OCI-LY7 (cell line): ENCODE measurements at regions of chr5 and their contacts with region 1.

Region 1: DNA sequence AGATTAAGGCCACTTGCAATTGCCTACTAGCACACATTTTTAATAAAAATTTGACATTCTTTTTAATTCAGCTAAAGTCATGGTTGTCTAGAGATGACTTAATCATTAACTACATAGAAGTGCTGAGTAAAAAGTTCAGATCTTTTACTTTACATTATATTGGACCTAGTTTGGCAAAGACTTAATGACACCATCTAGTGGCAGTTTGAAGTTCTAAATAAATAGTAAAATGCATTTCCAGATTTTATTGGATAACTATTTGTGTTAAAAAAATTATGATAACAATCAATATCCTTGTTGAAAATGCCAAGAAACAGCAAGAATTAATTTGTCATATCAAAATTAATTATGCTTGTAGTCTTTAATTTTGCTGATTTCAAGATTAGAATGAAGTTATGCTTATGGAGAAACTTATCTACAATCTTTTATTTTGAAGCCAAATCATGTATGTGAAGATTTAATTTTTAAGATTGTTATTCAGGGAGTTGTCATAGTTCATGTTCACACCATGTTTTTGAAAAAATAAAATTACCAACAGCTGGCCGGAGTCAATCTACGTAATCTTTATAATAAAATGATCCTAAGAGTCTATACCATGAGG is 69.6 kb upstream of the PJA2 start:
- DNase-seq: peak; percentile 33
- H3K4me3 ChIP-seq: no peak overlapping the region
- H3K27ac ChIP-seq: no peak overlapping the region
- H3K4me1 ChIP-seq: no peaks in the 10 kb centered on the region
- CTCF ChIP-seq: peak; percentile 82

Region 2: DNA sequence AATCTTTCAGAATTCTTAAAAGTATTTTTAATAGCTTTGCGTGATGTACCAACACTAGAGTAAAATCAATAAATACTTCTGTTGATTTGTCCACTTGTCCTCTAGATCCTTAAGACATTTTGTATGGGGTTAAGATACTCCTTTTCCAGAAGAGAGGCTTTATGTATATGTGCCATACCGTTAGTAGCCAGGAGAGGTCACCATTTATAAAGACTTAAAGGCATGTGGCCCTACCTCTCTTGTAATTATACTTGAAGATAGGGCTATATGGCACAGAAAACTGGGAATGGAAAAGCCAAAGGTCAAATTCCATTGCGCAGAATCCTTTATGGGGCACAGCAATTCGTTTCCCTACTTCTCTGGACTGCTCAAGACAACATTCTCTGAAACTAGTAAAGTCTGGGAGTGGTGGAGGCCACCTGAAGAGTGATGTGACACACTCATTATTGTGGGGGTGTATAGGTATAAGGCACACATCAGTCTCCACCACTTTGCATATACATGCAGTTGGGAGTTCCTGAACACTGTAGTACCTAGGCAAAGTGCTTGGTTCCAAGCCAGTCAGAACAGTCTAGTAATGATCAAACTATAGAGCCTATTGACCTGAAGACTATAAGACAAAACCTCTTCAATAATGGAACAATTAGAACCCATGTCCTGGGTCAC is 957.4 kb before region 1 on chr5:
- CTCF ChIA-PET with region 1: no interaction called
- POLR2A ChIA-PET with region 1: no interaction called
- intact Hi-C with region 1: loop called (anchors 2 kb)
- DNase-seq: peak; percentile 57
- H3K4me3 ChIP-seq: no peak overlapping the region
- H3K27ac ChIP-seq: no peak overlapping the region
- H3K4me1 ChIP-seq: peaks cover 9% of the 10 kb centered on the region
- CTCF ChIP-seq: peak; percentile 84

Region 3: DNA sequence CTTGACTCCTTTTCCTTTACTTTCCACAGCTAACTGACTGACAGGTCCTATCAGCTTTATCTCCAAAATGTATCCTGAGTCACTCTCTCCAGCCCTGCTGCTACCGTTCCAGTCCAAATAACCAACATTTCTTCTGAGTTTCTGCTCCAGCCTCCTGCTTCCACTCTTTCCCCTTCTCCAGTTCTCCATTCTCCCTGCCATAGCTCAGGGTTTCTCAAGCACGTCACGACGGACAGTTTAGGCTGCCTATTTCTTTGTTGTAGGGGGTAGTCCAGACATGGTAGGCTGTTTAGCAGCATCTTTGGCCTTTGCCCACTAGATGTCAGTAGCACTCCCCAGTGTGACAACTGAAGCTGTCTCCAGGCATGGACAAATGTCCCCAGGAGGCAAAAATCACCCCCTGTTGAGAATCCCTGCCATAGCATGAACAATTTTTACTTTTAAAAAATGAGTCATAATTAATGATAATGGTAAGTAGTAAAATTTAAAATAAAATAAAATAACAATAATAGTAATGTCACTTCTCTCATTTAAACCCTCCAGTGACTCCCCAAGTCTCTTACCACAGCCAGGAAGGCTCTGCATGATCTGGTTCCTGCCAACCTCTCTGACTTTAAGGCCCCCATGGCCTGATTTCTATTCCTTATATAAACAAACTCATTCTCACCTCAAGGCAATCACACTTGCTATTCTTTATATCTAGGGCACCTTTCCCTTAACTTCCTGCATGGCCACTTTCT is 837.0 kb before region 1 on chr5:
- CTCF ChIA-PET with region 1: no interaction called
- POLR2A ChIA-PET with region 1: no interaction called
- intact Hi-C with region 1: loop called (anchors 5 kb)
- DNase-seq: peak; percentile 61
- H3K4me3 ChIP-seq: no peak overlapping the region
- H3K27ac ChIP-seq: no peak overlapping the region
- H3K4me1 ChIP-seq: no peaks in the 10 kb centered on the region
- CTCF ChIP-seq: peak; percentile 89